Vagina (tissue), 2 donors: ENCODE measurements at regions of chr21 and their contacts with region 1.

Region 1: GRCh38 chr21:20253261-20253660 is 744.9 kb upstream of the NCAM2 start:
- DNase-seq: no peak
- H3K4me3 ChIP-seq: no peak overlapping the region
- H3K27ac ChIP-seq: no peak overlapping the region
- H3K4me1 ChIP-seq: no peaks in the 10 kb centered on the region
- H3K27me3 ChIP-seq: no peaks in the 10 kb centered on the region
- CTCF ChIP-seq: no peak
- POLR2A ChIP-seq: no peak

Region 2: DNA sequence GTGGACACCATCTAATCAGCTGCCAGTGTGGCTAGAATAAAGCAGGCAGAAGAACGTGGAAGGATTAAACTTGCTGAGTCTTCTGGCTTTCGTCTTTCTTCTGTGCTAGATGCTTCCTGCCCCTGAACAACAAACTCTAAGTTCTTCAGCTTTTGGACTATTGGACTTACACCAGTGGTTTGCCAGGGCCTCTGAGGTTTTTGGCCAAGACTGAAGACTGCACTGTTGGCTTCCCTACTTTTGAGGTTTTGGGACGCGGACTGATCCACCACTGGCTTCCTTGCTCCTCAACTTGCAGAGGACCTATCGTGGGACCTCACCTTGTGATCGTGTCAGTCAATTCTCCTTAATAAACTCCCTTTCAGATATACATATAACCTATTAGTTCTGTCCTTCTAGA is 48.8 kb after region 1 on chr21:
- intact Hi-C with region 1: loop called (anchors 2 kb)
- DNase-seq: no peak
- H3K4me3 ChIP-seq: no peak overlapping the region
- H3K27ac ChIP-seq: no peak overlapping the region
- H3K4me1 ChIP-seq: no peaks in the 10 kb centered on the region
- H3K27me3 ChIP-seq: no peaks in the 10 kb centered on the region
- CTCF ChIP-seq: no peak
- POLR2A ChIP-seq: no peak